ENCODE measurements at regions of chr15 and their contacts with region 1.

Region 1: GRCh38 chr15:39248204-39248603 is 332.7 kb upstream of the THBS1 start:
- DNase-seq: peak; percentile 51 to 68 (median 62)
- ATAC-seq: peak; percentile 55 to 91 (median 78)
- H3K4me3 ChIP-seq: no peak overlapping the region
- H3K27ac ChIP-seq: peak overlapping the region in 9 of 12 donors; percentile 3 to 51 (median 30)
- H3K4me1 ChIP-seq: peaks cover 0 to 12% (median 2%) of the 10 kb centered on the region in 12 donors
- H3K27me3 ChIP-seq: no peaks in the 10 kb centered on the region
- CTCF ChIP-seq: no peak
- POLR2A ChIP-seq: no peak

Region 2: GRCh38 chr15:39188925-39189324 is 59.3 kb before region 1 on chr15:
- intact Hi-C with region 1: loop called in 1 of 10 experiments (anchors 10 kb)
- DNase-seq: no peak
- ATAC-seq: peak in 1 of 4 donors; percentile 22
- H3K4me3 ChIP-seq: no peak overlapping the region
- H3K27ac ChIP-seq: no peak overlapping the region
- H3K4me1 ChIP-seq: peaks cover 0 to under 1% (median 0%) of the 10 kb centered on the region in 12 donors
- H3K27me3 ChIP-seq: no peaks in the 10 kb centered on the region
- CTCF ChIP-seq: no peak
- POLR2A ChIP-seq: no peak

Region 3: DNA sequence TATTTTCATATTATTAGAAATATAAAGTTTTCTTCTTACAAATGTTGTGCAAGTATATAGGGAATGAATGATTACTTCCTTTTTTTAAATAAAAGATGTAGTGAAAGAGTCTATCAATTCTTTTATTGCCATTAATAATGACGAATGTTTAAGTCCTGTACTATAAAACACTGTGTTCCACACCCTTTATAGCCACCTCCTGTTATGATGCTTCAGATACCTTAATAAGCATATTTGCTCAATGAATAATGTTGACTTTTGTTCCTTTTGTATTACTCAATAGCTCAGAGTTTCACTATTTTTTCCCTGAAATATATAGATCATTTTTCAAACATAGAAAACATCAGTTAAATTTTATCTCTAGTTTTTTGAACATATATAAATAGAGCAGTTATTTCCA is 45.6 kb before region 1 on chr15:
- intact Hi-C with region 1: loop called in 1 of 10 experiments (anchors 5 kb)
- DNase-seq: no peak
- ATAC-seq: no peak
- H3K4me3 ChIP-seq: no peak overlapping the region
- H3K27ac ChIP-seq: no peak overlapping the region
- H3K4me1 ChIP-seq: peaks cover 0 to 12% (median 0%) of the 10 kb centered on the region in 12 donors
- H3K27me3 ChIP-seq: no peaks in the 10 kb centered on the region
- CTCF ChIP-seq: no peak
- POLR2A ChIP-seq: no peak